PC-9 (cell line): ENCODE measurements at regions of chr6 and their contacts with region 1.

Region 1: GRCh38 chr6:144834426-144835038 is 549.4 kb downstream of the UTRN start:
- DNase-seq: no peak
- H3K4me3 ChIP-seq: no peak overlapping the region
- H3K27ac ChIP-seq: no peak overlapping the region
- H3K4me1 ChIP-seq: no peaks in the 10 kb centered on the region
- H3K27me3 ChIP-seq: no peaks in the 10 kb centered on the region
- CTCF ChIP-seq: no peak

Region 2: DNA sequence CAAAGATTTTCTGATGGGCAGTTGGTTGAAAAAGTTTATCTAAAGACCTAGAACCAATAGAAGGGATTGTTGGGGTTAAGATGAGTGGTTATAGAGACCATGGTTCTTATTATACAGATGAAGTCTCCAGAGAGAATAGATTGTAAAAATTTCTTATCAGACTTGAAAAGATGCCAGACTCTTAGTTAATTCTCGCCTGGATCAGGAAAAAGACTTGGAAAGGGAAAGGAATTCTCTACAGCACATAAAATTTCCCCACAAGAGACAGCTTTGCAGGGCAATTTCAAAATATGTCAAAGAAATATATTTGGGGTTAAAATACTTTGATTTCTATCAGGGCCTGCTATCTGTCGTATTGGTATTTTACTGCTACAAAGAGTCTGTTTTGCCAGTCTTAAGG is 33.2 kb after region 1 on chr6:
- CTCF ChIA-PET with region 1: no interaction called
- POLR2A ChIA-PET with region 1: interaction called, 19 read pairs
- intact Hi-C with region 1: no loop called
- DNase-seq: no peak
- H3K4me3 ChIP-seq: no peak overlapping the region
- H3K27ac ChIP-seq: no peak overlapping the region
- H3K4me1 ChIP-seq: no peaks in the 10 kb centered on the region
- H3K27me3 ChIP-seq: no peaks in the 10 kb centered on the region
- CTCF ChIP-seq: no peak

Region 3: GRCh38 chr6:144879436-144879835 is 44.9 kb after region 1 on chr6:
- CTCF ChIA-PET with region 1: no interaction called
- POLR2A ChIA-PET with region 1: no interaction called
- intact Hi-C with region 1: no loop called
- DNase-seq: peak in 1 of 2 experiments; percentile 80
- H3K4me3 ChIP-seq: no peak overlapping the region
- H3K27ac ChIP-seq: peak overlapping the region; percentile 65
- H3K4me1 ChIP-seq: peaks cover 9% of the 10 kb centered on the region; the same call in 1 of the 2 replicates
- H3K27me3 ChIP-seq: no peaks in the 10 kb centered on the region
- CTCF ChIP-seq: no peak